HEK293T (cell line): ENCODE measurements at regions of chr7 and their contacts with region 1.

Region 1: GRCh38 chr7:44847508-44847920 is 373 bp downstream of the H2AZ2 start:
- DNase-seq: peak; percentile 84

Region 2: DNA sequence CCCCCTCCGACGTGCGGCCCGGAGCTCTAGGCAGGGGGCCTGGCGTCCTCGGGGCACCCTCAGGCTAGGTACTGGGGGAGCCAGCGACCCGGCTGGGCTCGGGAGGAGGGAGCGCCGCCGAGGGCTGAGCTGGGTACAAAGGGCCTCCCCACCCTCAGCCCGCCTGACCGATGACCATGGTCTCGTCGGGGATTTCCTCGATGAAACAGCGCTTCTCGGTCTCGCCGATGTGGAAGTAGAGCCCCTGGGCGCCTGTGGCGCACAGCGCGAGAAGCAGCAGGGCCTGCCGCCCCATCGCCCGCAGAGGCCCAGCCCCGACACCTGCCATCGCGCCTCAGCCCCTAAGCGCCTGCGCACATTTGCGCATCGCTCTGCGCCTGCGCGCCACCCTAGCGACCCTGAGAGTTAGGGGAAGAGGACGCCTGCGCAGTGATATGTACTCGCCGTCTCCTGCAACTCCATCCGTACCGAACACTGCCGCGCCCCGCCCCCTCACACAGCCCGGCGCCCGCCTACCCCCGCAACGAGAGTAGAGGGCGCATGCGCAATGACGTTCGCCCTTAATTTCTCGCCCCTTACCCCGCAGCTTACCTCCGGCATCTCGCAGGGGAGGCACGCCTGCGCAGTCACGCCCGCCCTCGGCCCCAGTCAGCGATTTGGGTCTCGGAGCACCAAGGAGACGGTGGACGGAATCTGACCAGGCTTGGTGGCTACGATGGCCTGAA is 265.5 kb before region 1 on chr7 and contains the start of gene TMED4:
- CTCF ChIA-PET with region 1: no interaction called
- POLR2A ChIA-PET with region 1: interaction called, 22 read pairs
- DNase-seq: peak; percentile 100

Region 3: GRCh38 chr7:44678471-44679179 is 168.9 kb before region 1 on chr7:
- CTCF ChIA-PET with region 1: no interaction called
- POLR2A ChIA-PET with region 1: no interaction called
- DNase-seq: no peak

Region 4: DNA sequence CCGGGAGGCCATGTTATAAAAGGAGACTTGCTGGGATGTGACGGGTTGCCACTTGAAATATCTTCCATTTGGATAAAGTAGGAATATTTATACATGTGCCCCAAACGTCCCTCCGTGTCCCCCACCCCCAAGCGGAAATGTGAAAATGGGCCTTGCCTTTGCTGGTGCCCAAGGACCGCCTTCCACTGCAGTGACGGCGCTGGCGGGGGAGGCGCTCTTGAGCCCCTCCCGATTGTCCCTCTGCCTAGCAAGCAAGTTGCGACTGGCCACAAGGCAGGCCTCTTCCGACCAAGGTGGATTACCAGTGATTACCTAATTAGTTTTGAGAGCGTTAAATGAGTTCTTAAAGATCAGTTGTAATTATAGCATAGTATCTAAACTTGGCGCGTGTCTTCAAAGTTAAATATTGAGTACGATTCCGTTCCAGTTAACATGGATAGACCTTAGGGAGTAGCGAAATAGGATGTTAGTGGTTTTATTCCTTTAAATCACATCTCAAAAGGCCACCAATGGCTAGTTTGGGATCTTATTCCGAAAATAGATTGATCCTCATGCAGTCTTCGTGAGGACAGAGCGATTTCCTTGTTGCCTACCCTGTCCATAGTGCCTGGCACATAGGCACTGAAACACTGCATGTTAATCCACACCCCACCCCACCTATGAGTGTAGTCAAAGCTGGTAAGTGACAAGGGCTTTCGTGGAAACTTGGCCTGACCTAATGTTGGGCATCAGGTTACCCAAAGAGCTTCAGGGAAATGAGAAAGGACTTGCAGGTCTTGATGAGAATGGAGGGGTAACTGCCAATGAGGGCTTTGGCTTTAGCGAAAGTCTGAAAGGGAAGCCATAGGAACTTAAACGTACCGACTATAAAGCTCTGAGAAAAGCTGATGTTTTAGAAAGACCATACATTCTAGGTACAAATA is 49.9 kb before region 1 on chr7:
- CTCF ChIA-PET with region 1: interaction called, 3 read pairs
- POLR2A ChIA-PET with region 1: interaction called, 17 read pairs
- DNase-seq: peak; percentile 73

Region 5: DNA sequence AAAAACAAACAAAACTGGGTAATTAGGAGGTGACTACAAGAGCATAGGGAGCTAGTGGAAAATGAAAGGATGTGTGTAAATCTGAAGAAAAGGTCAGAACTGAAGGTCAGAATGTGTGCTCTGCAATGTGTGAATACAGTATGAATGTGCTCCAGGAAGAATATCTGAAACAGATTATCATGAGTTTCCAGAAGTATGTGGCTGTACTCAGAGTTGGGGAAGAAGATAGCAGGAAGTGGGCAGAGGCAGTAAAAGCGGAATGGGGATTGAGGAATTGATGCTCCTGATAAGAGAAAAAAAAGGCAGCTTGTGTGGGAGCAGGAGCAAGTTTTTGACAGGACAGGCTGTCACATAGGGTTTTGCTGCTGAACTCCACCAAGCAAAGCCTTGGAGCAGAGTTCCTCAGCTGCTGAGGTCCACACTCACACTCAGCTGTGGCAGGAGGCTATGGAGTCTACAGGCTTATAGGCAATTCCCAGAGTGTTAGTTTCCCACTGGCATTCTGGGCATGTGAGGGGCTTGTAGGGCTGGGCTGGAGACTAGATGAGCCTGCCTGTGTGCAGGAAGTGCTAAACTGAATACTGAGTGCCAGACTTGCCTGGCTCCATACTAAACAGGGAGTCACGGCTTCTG is 22.5 kb before region 1 on chr7:
- CTCF ChIA-PET with region 1: no interaction called
- POLR2A ChIA-PET with region 1: interaction called, 13 read pairs
- DNase-seq: no peak

Region 6: GRCh38 chr7:44867073-44867995 is 19.8 kb after region 1 on chr7:
- CTCF ChIA-PET with region 1: no interaction called
- POLR2A ChIA-PET with region 1: interaction called, 13 read pairs
- DNase-seq: no peak

Region 7: GRCh38 chr7:45143616-45144015 is 296.1 kb after region 1 on chr7:
- CTCF ChIA-PET with region 1: no interaction called
- POLR2A ChIA-PET with region 1: no interaction called
- DNase-seq: no peak